A673 (cell line): ENCODE measurements at regions of chr6 and their contacts with region 1.

Region 1: GRCh38 chr6:31068669-31069340 is 43.6 kb downstream of the C6orf15 start:
- DNase-seq: peak; percentile 88
- H3K4me3 ChIP-seq: no peak overlapping the region
- H3K27ac ChIP-seq: no peak overlapping the region
- H3K4me1 ChIP-seq: peaks cover 9% of the 10 kb centered on the region
- H3K27me3 ChIP-seq: no peaks in the 10 kb centered on the region
- CTCF ChIP-seq: peak; percentile 93

Region 2: DNA sequence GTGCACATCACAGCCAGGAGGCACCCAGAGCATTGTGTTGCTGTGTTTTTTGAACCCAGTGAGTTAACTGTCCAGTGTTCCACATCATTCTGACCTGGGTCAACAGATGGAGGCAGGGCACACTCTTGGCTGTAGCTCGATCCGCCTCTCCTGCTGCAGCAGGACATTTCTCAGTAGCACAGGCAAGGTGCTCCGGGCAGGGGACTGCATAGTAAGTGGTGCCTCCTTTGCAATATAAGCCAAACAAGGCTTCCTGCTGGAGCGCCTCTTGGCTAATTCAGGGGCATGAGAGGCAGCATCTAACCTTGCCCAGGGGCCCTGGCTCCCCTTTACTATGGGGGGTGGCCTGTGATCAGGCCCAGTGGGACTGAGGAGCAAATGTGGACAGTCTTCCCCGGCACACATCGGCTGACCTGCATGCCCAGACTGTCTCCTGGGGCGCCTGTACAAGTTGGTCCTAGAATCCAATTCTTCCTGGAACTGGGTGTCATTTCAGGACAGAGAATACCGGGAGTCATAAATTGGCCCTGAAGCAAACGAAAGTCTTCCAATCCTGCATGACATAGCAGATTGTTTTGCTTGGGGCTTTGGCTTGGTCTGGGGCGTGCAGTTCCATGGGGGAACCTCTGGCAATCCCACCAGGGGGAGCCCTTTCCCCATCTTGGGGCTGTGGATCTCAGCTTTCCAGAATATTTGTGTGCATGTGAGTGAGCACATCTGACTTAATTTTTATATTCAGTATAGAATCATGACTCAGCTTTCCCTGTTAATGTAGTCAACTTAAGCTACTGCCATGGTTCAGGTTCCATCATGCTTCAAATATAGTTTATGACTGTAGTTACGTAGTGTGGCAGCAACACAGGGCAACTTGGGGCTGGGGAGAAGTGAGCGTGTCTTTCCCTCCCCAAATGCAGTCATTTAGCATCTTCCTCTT is 240.5 kb before region 1 on chr6:
- CTCF ChIA-PET with region 1: interaction called, 6 read pairs
- POLR2A ChIA-PET with region 1: no interaction called
- intact Hi-C with region 1: loop called (anchors 5 kb)
- DNase-seq: peak; percentile 90
- H3K4me3 ChIP-seq: no peak overlapping the region
- H3K27ac ChIP-seq: peak overlapping the region; percentile 40
- H3K4me1 ChIP-seq: peaks cover 5% of the 10 kb centered on the region
- H3K27me3 ChIP-seq: no peaks in the 10 kb centered on the region
- CTCF ChIP-seq: peak; percentile 96

Region 3: DNA sequence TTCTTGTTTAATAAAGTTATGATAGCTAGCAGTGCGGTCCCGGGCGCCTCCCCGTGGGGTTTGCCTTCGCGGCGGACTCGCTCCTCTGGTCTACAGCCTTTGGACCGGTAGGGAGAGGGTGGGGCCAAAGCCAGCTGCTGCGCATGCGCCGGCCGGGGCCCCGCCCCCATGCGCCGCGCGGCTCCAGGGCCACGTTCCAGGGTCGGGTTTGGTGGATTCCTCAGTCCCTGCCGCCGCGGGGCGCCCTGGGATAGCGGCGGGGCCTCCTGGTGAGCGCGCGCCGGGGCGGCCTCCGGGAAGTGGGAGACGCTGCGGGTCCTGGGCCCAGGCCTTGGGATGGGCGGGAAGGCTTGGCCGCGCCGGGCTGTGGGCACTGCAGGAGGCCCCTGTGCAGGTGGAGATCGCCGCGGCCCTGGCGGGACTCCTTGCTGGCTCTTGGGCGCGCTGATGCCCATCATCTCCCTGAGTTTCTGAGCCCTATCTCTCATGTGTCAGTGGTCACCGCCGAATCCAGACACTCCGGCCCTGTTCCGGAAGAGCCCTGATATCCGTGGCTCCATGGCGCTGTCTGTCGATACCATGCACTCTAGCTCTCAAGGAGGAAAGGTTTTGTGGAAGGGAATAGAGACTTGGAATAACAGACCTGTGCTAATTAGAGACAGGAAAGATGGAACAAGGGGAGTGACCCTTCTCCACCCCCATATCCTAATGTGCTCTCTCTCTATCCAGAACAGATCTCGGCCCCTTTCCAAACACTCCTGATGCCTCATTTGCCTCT is 154.5 kb before region 1 on chr6 and contains the start of gene VARS2:
- CTCF ChIA-PET with region 1: interaction called, 37 read pairs
- POLR2A ChIA-PET with region 1: no interaction called
- intact Hi-C with region 1: loop called (anchors 1 kb)
- DNase-seq: peak; percentile 89
- H3K4me3 ChIP-seq: peak within 1 kb of the TSS; percentile 62
- H3K27ac ChIP-seq: peak within 1 kb of the TSS; percentile 75
- H3K4me1 ChIP-seq: peaks cover 13% of the 10 kb centered on the region
- H3K27me3 ChIP-seq: no peaks in the 10 kb centered on the region
- CTCF ChIP-seq: peak; percentile 40
- total RNA-seq, gene VARS2: 48.4 and 53.4 TPM in 2 replicates

Region 4: DNA sequence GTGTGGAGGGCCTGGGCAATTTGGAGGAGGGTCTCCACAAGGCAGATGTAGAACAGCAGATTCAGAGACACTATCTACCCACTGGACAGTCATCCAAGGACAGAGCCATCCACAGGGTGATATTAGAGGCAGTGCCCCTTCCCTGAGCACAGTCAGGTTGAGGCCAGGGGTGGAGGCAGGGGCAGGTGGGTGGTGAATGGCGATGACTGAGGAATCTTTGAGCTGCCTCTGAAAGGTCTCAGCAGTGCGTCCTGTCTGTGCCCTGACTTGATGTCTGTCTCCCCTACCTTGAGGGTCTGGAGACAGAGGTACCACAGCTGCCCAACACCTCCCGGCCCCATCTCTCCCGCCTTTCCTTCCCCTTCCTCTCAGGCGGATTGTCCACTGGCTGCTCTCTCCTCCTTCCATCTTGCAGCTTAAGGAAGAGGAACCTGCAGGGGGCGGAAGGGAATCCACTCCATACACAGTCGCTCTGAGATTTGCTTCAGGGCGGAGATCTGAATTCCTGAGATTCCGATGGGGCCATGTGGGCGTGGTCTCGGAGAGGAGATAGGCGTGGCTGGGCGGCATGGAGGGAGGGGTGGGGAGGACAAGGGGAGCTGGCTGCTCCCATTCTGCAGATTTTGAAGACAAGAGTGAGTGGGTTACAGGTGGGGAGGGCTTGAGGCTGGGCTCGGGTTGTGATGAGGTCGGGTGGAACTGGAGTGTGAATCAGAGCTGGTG is 126.3 kb before region 1 on chr6:
- CTCF ChIA-PET with region 1: interaction called, 11 read pairs
- POLR2A ChIA-PET with region 1: no interaction called
- intact Hi-C with region 1: no loop called
- DNase-seq: peak; percentile 96
- H3K4me3 ChIP-seq: no peak overlapping the region
- H3K27ac ChIP-seq: peak overlapping the region; percentile 67
- H3K4me1 ChIP-seq: peaks cover 18% of the 10 kb centered on the region
- H3K27me3 ChIP-seq: no peaks in the 10 kb centered on the region
- CTCF ChIP-seq: peak; percentile 72